CD4-positive, alpha-beta memory T cell (primary cell): ENCODE measurements at regions of chr4 and their contacts with region 1.

Region 1: DNA sequence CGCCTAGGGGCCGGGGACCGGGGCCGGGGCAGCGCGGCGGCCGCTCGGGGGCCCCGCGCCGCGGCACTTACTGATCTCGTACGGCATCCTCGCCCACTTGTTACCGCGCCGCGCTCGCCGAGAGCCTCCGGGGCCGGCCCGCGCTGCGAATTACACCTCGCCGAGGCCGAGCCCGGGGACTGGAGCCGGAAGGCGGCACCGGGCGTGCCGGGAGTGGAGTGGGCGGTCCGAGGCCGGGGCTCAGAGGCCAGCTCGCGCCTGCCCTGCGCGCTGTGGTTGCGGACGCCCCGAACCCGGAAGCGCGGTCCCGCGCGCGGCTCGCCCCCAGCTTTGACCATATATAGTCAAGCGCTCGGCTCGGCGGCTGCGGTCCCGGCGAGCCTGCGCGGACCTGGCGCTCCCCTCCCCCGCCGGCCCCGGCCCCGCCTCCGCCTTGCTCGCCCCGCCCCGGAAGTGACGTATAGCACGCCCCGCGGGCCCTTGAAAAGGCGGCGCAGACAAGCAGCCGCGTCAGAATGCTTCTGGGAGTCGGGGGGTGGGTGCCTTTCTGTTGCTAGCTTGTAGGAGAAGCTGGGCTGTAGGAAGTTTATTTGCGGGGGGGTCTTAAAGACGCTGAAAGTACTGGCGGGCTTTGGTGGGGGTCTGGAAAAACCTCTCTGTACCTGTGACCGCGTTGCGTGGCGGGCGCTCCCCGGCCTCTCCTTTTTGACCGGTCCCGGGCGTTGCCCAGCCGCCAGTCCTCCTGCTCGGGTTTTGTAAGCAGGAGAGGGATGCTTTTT is at the start of gene WDR1:
- DNase-seq: peak; percentile 86 to 91 (median 89)
- H3K4me3 ChIP-seq: peak within 1 kb of the TSS; percentile 50 to 92
- H3K4me3 Mint-ChIP-seq: peak within 1 kb of the TSS; percentile 95 to 98 (median 97)
- H3K27ac ChIP-seq: peak within 1 kb of the TSS; percentile 90
- H3K27ac Mint-ChIP-seq: peak within 1 kb of the TSS; percentile 96 to 99 (median 98)
- H3K4me1 ChIP-seq: peaks cover 61% of the 10 kb centered on the region
- H3K4me1 Mint-ChIP-seq: peaks cover 46 to 73% (median 60%) of the 10 kb centered on the region in 4 donors
- H3K27me3 ChIP-seq: no peaks in the 10 kb centered on the region
- H3K27me3 Mint-ChIP-seq: no peaks in the 10 kb centered on the region
- total RNA-seq, gene WDR1: 295 to 298 TPM

Region 2: GRCh38 chr4:8478801-8479744 is 1637.7 kb before region 1 on chr4:
- CTCF ChIA-PET with region 1: no interaction called
- POLR2A ChIA-PET with region 1: no interaction called
- intact Hi-C with region 1: no loop called
- DNase-seq: no peak
- H3K4me3 ChIP-seq: no peak overlapping the region
- H3K4me3 Mint-ChIP-seq: no peak overlapping the region
- H3K27ac ChIP-seq: no peak overlapping the region
- H3K27ac Mint-ChIP-seq: peak overlapping the region in 1 of 7 donors; percentile 72
- H3K4me1 ChIP-seq: no peaks in the 10 kb centered on the region
- H3K4me1 Mint-ChIP-seq: peaks cover 0 to 1% (median 0%) of the 10 kb centered on the region in 4 donors
- H3K27me3 ChIP-seq: no peaks in the 10 kb centered on the region
- H3K27me3 Mint-ChIP-seq: no peaks in the 10 kb centered on the region

Region 3: DNA sequence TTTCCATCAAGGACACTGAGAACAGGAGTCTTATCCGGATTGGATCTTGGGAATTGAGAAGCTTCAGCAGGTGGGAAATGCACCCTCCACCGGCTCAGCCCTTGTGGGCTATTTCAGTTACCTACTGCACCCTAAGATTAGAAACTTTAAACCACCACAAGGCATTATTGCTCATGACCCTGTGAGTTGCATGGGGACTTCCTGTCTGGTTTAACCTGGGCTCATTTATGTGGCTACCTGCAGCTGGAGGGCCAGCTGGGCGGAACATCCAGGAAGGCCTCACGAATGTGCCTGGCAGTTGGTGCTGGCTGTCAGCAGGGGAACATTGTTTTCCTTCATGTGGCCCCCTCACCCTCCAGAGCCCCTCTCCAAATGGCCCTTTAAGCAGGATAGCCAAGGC is 508.5 kb before region 1 on chr4:
- CTCF ChIA-PET with region 1: no interaction called
- POLR2A ChIA-PET with region 1: interaction called, 11 read pairs
- intact Hi-C with region 1: loop called (anchors 10 kb)
- DNase-seq: no peak
- H3K4me3 ChIP-seq: no peak overlapping the region
- H3K4me3 Mint-ChIP-seq: peak overlapping the region in 1 of 8 donors; percentile 23
- H3K27ac ChIP-seq: no peak overlapping the region
- H3K27ac Mint-ChIP-seq: no peak overlapping the region
- H3K4me1 ChIP-seq: peaks cover 18% of the 10 kb centered on the region
- H3K4me1 Mint-ChIP-seq: peaks cover 17 to 34% (median 27%) of the 10 kb centered on the region in 4 donors
- H3K27me3 ChIP-seq: no peaks in the 10 kb centered on the region
- H3K27me3 Mint-ChIP-seq: no peaks in the 10 kb centered on the region

Region 4: DNA sequence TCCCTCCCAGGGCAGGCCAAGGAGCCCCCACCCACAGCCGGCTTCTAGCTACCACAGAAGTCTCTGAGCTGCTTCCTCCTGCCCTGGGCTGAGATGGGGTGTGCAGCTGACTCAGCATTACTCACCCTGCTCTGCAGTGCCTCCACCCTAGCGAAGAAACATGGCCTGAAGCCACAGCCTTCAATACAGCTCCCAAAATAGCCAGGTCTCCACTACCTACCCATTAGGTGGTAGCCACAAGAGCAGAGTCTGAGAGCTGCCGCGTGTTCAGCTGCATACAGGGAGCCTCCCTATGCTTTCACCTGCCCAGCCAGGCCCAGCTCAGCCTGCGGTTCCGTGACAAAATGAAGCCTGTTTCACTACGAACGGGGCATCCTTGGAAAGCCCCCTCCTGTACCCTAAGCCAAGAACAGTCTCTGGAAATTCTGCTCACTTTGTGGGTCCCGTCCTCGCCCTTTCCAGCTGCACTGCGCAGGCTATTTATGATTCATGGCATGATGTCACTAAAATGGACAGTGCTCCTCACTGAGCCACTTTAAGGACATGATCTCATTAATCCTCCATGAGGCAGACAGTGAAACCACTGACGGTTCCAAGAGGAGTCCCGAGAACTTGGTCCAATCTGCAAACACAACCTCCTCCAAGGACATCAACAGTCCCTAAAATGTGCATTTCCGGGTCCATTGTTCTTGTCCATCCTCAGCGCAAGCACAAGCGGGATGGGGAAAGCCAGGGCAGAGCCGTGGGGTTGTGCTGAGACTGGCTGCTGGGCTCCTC is 20.4 kb before region 1 on chr4:
- CTCF ChIA-PET with region 1: interaction called, 12 read pairs
- POLR2A ChIA-PET with region 1: interaction called, 396 read pairs
- intact Hi-C with region 1: loop called (anchors 1 kb)
- DNase-seq: peak; percentile 70 to 91 (median 79)
- H3K4me3 ChIP-seq: peak overlapping the region in 1 of 2 donors; percentile 28
- H3K4me3 Mint-ChIP-seq: peak overlapping the region; percentile 38 to 79 (median 64)
- H3K27ac ChIP-seq: peak overlapping the region; percentile 74
- H3K27ac Mint-ChIP-seq: peak overlapping the region; percentile 89 to 99 (median 95)
- H3K4me1 ChIP-seq: peaks cover 99% of the 10 kb centered on the region
- H3K4me1 Mint-ChIP-seq: peaks cover 65 to 100% (median 87%) of the 10 kb centered on the region in 4 donors
- H3K27me3 ChIP-seq: no peaks in the 10 kb centered on the region
- H3K27me3 Mint-ChIP-seq: no peaks in the 10 kb centered on the region

Region 5: GRCh38 chr4:10157478-10158332 is 40.9 kb after region 1 on chr4:
- CTCF ChIA-PET with region 1: interaction called, 11 read pairs
- POLR2A ChIA-PET with region 1: interaction called, 14 read pairs
- intact Hi-C with region 1: loop called (anchors 5 kb)
- DNase-seq: peak in 4 of 5 donors; percentile 21 to 34 (median 28)
- H3K4me3 ChIP-seq: no peak overlapping the region
- H3K4me3 Mint-ChIP-seq: no peak overlapping the region
- H3K27ac ChIP-seq: no peak overlapping the region
- H3K27ac Mint-ChIP-seq: peak overlapping the region in 1 of 7 donors; percentile 19
- H3K4me1 ChIP-seq: peaks cover 34% of the 10 kb centered on the region
- H3K4me1 Mint-ChIP-seq: peaks cover 22 to 41% (median 29%) of the 10 kb centered on the region in 4 donors
- H3K27me3 ChIP-seq: no peaks in the 10 kb centered on the region
- H3K27me3 Mint-ChIP-seq: peaks cover 0 to 1% of the 10 kb centered on the region in 2 donors

Region 6: GRCh38 chr4:11471618-11472017 is 1354.8 kb after region 1 on chr4:
- CTCF ChIA-PET with region 1: no interaction called
- POLR2A ChIA-PET with region 1: no interaction called
- intact Hi-C with region 1: loop called (anchors 5 kb)
- DNase-seq: peak; percentile 67 to 80 (median 75)
- H3K4me3 ChIP-seq: peak overlapping the region; percentile 63 to 67
- H3K4me3 Mint-ChIP-seq: peak overlapping the region; percentile 85 to 99 (median 92)
- H3K27ac ChIP-seq: peak overlapping the region; percentile 61
- H3K27ac Mint-ChIP-seq: peak overlapping the region; percentile 83 to 100 (median 99)
- H3K4me1 ChIP-seq: peaks cover 24% of the 10 kb centered on the region
- H3K4me1 Mint-ChIP-seq: peaks cover 22 to 34% (median 28%) of the 10 kb centered on the region in 4 donors
- H3K27me3 ChIP-seq: no peaks in the 10 kb centered on the region
- H3K27me3 Mint-ChIP-seq: no peaks in the 10 kb centered on the region